Activated B cell treated with CpG ODN at 0.5 μM for 24 hours (primary cell): ENCODE measurements at regions of chr1 and their contacts with region 1.

Region 1: DNA sequence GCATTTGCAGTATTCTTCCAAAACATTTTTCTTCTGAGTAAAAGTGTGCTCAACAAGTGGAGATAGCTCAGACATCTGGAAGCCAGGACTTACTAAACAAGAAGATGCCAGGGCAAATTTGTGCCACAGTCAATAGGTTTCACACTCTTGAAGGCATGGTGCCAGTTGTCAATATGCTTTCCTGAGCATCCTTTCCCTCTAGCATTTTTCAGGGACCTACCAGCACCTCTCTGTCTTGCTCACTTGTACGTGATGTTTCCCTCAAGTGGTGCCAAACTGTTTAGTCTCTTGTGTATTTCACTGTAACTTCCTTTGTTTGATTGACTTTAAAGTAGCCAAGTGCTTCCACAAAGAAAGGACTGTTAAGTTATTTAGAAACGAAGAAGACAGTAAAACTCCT is 194.0 kb upstream of the SGIP1 start:
- DNase-seq: no peak
- ATAC-seq: no peak
- H3K4me3 Mint-ChIP-seq: peak overlapping the region; percentile 64
- H3K27ac Mint-ChIP-seq: peak overlapping the region; percentile 83
- H3K4me1 Mint-ChIP-seq: peaks cover 86% of the 10 kb centered on the region
- H3K27me3 Mint-ChIP-seq: no peaks in the 10 kb centered on the region
- CTCF ChIP-seq: no peak

Region 2: GRCh38 chr1:66350001-66350547 is 10.1 kb after region 1 on chr1:
- CTCF ChIA-PET with region 1: interaction called, 4 read pairs
- POLR2A ChIA-PET with region 1: interaction called, 72 read pairs
- intact Hi-C with region 1: loop called (anchors 1 kb)
- DNase-seq: no peak
- ATAC-seq: peak; percentile 80
- H3K4me3 Mint-ChIP-seq: peak overlapping the region; percentile 72
- H3K27ac Mint-ChIP-seq: peak overlapping the region; percentile 89
- H3K4me1 Mint-ChIP-seq: peaks cover 97% of the 10 kb centered on the region
- H3K27me3 Mint-ChIP-seq: no peaks in the 10 kb centered on the region
- CTCF ChIP-seq: no peak

Region 3: GRCh38 chr1:66365635-66366034 is 25.7 kb after region 1 on chr1:
- CTCF ChIA-PET with region 1: interaction called, 3 read pairs
- POLR2A ChIA-PET with region 1: interaction called, 279 read pairs
- intact Hi-C with region 1: loop called (anchors 1 kb)
- DNase-seq: no peak
- ATAC-seq: no peak
- H3K4me3 Mint-ChIP-seq: no peak overlapping the region
- H3K27ac Mint-ChIP-seq: peak overlapping the region; percentile 75
- H3K4me1 Mint-ChIP-seq: peaks cover 81% of the 10 kb centered on the region
- H3K27me3 Mint-ChIP-seq: no peaks in the 10 kb centered on the region
- CTCF ChIP-seq: no peak

Region 4: DNA sequence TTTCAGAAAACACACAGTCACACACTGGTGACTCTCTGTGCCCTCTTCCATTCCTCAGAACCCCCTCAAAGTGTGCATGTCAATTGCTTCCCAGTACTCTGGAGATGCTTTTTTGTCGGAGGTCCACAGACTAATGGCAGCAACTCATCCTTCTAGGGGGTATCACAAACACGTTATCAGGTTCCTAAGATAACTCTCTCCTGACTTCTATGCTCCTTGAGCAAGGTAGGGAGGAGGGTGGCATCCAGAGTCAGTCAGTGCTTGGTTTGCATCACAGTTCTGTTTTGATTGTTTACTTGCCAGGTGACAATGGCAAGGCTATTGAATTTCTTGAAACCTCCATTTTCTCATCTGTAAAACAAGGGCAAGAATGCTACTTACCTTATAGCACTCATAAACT is 372.9 kb after region 1 on chr1:
- CTCF ChIA-PET with region 1: no interaction called
- POLR2A ChIA-PET with region 1: no interaction called
- intact Hi-C with region 1: no loop called
- DNase-seq: no peak
- ATAC-seq: no peak
- H3K4me3 Mint-ChIP-seq: no peak overlapping the region
- H3K27ac Mint-ChIP-seq: no peak overlapping the region
- H3K4me1 Mint-ChIP-seq: no peaks in the 10 kb centered on the region
- H3K27me3 Mint-ChIP-seq: peaks cover 12% of the 10 kb centered on the region
- CTCF ChIP-seq: no peak